HCT116 (cell line): ENCODE measurements at regions of chr20 and their contacts with region 1.

Region 1: GRCh38 chr20:31723319-31724078 is 831 bp upstream of the BCL2L1 start:
- DNase-seq: peak; percentile 95
- ATAC-seq: peak; percentile 84
- H3K4me3 ChIP-seq: peak overlapping the region; percentile 82 to 87
- H3K27ac ChIP-seq: peak overlapping the region; percentile 98
- H3K4me1 ChIP-seq: peaks cover 43 to 73% of the 10 kb centered on the region in 2 experiments
- H3K27me3 ChIP-seq: no peaks in the 10 kb centered on the region
- CTCF ChIP-seq: peak in 2 of 3 experiments; percentile 89 to 91; a peak in 4 of 6 replicates
- POLR2A ChIP-seq: peak; percentile 67
- RAD21 ChIP-seq: no peak

Region 2: DNA sequence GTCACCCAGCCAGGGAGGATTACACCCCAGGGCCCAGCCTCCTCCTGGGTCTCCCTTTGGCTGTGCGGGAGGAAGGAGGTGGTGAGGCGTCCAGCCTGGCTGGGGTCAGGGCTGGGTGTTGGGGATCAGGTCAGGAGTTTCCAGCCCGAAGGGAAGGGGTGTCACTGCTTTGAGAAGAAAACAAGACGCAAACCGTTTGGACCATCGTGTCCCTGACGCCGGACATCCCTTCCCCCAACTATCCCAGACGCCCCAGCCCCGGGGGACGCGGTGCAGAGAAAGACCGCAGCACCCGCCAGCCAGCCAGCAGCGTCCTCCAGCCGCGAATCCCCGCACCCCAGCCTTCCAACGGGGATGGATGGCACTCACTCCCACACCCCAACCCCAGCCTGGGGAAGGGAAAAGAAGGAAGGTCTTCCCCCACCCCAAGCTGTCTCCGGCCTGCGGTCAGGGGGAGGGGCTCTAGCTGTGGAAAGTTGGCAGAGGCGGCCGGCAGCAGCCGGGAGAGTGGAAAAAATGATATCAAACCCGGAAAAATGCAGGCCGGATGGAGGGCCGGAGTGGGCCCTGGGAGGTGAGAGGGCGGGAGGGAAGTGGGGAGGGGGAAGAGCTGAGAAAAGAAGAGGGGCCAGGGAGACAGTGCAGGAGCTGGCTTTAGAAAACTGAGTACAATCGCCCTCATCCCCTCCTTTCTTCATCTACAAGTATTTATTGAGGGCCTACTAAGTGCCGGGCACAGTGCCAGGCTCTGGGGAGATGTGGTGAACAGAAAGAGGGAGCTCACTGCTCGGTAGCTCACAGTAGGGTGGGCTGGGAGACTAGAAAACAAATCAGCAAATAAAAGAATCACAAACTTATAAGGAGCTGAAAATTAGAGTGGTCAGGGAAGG is 237.8 kb before region 1 on chr20:
- CTCF ChIA-PET with region 1: no interaction called
- POLR2A ChIA-PET with region 1: no interaction called
- RAD21 ChIA-PET with region 1: no interaction called
- intact Hi-C with region 1: no loop called
- DNase-seq: no peak
- ATAC-seq: no peak
- H3K4me3 ChIP-seq: no peak overlapping the region
- H3K27ac ChIP-seq: no peak overlapping the region
- H3K4me1 ChIP-seq: no peaks in the 10 kb centered on the region
- H3K27me3 ChIP-seq: no peaks in the 10 kb centered on the region
- CTCF ChIP-seq: no peak
- POLR2A ChIP-seq: no peak
- RAD21 ChIP-seq: no peak

Region 3: GRCh38 chr20:31605031-31605901 is 118.2 kb before region 1 on chr20 and contains the start of gene ID1:
- CTCF ChIA-PET with region 1: interaction called, 27 read pairs
- POLR2A ChIA-PET with region 1: interaction called, 12 read pairs
- RAD21 ChIA-PET with region 1: interaction called in 1 of 2 experiments, 3 read pairs
- intact Hi-C with region 1: no loop called
- DNase-seq: peak; percentile 95
- ATAC-seq: peak; percentile 56
- H3K4me3 ChIP-seq: peak within 1 kb of the TSS; percentile 91 to 96
- H3K27ac ChIP-seq: peak within 1 kb of the TSS; percentile 98
- H3K4me1 ChIP-seq: peaks cover 60 to 93% of the 10 kb centered on the region in 2 experiments
- H3K27me3 ChIP-seq: no peaks in the 10 kb centered on the region
- CTCF ChIP-seq: no peak
- POLR2A ChIP-seq: peak; percentile 99
- RAD21 ChIP-seq: no peak
- total RNA-seq, gene ID1: 811 TPM

Region 4: GRCh38 chr20:31661625-31662371 is 61.7 kb before region 1 on chr20:
- CTCF ChIA-PET with region 1: interaction called, 127 read pairs
- POLR2A ChIA-PET with region 1: interaction called, 24 read pairs
- RAD21 ChIA-PET with region 1: interaction called, 22 to 24 read pairs
- intact Hi-C with region 1: loop called (anchors 1 kb)
- DNase-seq: peak; percentile 40
- ATAC-seq: peak; percentile 75
- H3K4me3 ChIP-seq: peak overlapping the region; percentile 2 to 12; a peak in 2 of 4 replicates
- H3K27ac ChIP-seq: peak overlapping the region; percentile 53
- H3K4me1 ChIP-seq: peaks cover 43 to 62% of the 10 kb centered on the region in 2 experiments
- H3K27me3 ChIP-seq: no peaks in the 10 kb centered on the region
- CTCF ChIP-seq: peak; percentile 60 to 71 (median 67)
- POLR2A ChIP-seq: no peak
- RAD21 ChIP-seq: peak; percentile 72

Region 5: DNA sequence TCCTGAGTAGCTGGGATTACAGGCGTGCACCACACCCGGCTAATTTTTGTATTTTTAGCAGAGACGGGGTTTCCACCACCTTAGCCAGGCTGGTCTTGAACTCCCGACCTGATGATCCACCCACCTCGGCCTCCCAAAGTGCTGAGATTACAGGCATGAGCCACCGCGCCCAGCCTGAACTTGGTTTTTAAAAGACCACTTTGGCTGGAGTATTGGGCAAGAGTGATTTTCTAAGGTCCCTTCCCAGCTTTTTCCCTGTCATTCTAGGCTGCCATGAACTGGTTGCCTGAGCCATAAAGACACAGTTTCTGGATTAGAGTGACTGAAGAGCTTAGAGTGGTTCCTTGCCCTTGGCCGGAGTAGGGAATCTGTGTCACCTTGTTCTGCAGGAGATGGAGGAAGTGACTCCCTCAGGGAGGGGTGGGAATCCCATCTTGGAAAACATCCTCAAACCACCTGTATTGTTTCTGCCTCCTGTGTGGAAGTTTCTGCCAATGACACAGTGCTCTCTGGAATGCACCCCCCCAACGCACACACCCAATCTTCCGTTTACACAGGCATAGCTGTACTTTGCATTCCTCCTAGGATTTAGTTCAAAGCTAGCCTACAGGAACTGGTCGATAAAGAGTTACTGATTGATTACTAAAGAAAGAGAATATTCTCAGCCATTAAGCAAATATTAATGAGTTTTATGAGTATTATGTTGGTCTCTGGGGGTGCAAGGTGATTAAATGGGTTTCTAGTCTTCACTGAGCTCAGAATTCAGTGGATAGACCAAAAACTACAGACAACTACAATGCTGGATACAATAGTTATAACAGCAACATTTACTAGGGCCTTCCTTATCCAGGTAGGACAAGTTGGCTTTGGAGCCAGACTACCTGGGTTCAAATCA is 19.0 kb before region 1 on chr20:
- CTCF ChIA-PET with region 1: interaction called, 18 read pairs
- POLR2A ChIA-PET with region 1: interaction called, 28 read pairs
- RAD21 ChIA-PET with region 1: interaction called, 3 to 4 read pairs
- intact Hi-C with region 1: no loop called
- DNase-seq: peak; percentile 93
- ATAC-seq: peak; percentile 88
- H3K4me3 ChIP-seq: peak overlapping the region in 1 of 2 experiments; percentile 26; a peak in 2 of 4 replicates
- H3K27ac ChIP-seq: peak overlapping the region; percentile 94
- H3K4me1 ChIP-seq: peaks cover 84 to 98% of the 10 kb centered on the region in 2 experiments
- H3K27me3 ChIP-seq: no peaks in the 10 kb centered on the region
- CTCF ChIP-seq: no peak
- POLR2A ChIP-seq: no peak
- RAD21 ChIP-seq: peak; percentile 32; the same call in 1 of the 2 replicates

Region 6: DNA sequence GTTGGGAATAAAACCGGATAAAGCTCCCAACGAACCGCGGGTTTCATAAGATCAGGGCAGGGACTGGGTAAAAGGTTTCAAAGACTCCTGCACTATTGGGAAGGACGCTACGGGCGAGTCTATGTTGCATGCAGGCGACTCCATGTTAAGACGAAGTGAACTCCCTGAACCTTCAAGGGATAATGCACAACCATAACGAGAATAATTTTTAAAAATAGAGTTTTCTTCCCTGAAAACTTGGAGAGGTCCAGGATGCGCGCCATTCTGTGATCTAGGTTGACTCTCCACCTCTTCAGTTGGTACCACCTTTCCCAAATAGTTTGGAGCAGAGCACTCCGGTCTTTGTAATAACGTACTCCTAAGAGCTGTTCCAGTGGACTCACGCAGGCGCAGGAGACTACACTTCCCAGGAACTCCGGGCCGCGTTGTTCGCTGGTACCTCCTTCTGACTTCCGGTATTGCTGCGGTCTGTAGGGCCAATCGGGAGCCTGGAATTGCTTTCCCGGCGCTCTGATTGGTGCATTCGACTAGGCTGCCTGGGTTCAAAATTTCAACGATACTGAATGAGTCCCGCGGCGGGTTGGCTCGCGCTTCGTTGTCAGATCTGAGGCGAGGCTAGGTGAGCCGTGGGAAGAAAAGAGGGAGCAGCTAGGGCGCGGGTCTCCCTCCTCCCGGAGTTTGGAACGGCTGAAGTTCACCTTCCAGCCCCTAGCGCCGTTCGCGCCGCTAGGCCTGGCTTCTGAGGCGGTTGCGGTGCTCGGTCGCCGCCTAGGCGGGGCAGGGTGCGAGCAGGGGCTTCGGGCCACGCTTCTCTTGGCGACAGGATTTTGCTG is 15.4 kb after region 1 on chr20 and contains the start of gene TPX2:
- CTCF ChIA-PET with region 1: interaction called, 16 read pairs
- POLR2A ChIA-PET with region 1: interaction called, 19 read pairs
- RAD21 ChIA-PET with region 1: interaction called in 1 of 2 experiments, 3 read pairs
- intact Hi-C with region 1: no loop called
- DNase-seq: peak; percentile 93
- ATAC-seq: peak; percentile 97
- H3K4me3 ChIP-seq: peak within 1 kb of the TSS; percentile 74 to 86
- H3K27ac ChIP-seq: peak within 1 kb of the TSS; percentile 85
- H3K4me1 ChIP-seq: peaks cover 13 to 28% of the 10 kb centered on the region in 2 experiments; a peak in 3 of 4 replicates
- H3K27me3 ChIP-seq: no peaks in the 10 kb centered on the region
- CTCF ChIP-seq: 0 out of 6 replicates have a peak, but pooled peaks of 1 of the 3 experiments have one; percentile 10
- POLR2A ChIP-seq: peak; percentile 94
- RAD21 ChIP-seq: no peak
- total RNA-seq, gene TPX2: 163 TPM

Region 7: GRCh38 chr20:32139946-32140345 is 416.4 kb after region 1 on chr20:
- CTCF ChIA-PET with region 1: no interaction called
- POLR2A ChIA-PET with region 1: no interaction called
- RAD21 ChIA-PET with region 1: no interaction called
- intact Hi-C with region 1: no loop called
- DNase-seq: no peak
- ATAC-seq: no peak
- H3K4me3 ChIP-seq: no peak overlapping the region
- H3K27ac ChIP-seq: no peak overlapping the region
- H3K4me1 ChIP-seq: no peaks in the 10 kb centered on the region
- H3K27me3 ChIP-seq: no peaks in the 10 kb centered on the region
- CTCF ChIP-seq: no peak
- POLR2A ChIP-seq: no peak
- RAD21 ChIP-seq: no peak